AG04449 (cell line): ENCODE measurements at regions of chr3 and their contacts with region 1.

Region 1: GRCh38 chr3:98602078-98602678 is 8.8 kb upstream of the CPOX start:
- DNase-seq: peak; percentile 17
- H3K4me3 ChIP-seq: no peak overlapping the region
- CTCF ChIP-seq: peak; percentile 67

Region 2: DNA sequence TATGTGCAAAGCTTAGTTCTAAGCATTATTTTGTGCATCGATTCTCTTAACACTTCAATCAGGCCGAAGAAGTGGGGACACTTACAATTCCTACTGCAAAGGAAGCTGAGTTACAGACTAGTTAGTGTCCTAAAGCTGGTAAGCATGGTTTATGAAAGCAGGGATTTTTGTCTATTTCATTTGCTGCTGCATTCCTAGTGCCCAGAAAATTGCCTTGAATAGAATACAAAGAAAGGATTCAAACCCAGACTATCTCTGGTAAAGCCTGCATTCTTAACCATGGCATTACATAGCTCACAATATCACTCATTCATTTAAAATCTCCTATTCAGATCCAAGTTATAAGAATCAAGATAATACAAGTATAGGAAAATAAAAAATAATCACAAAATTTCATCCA is 15.7 kb after region 1 on chr3:
- CTCF ChIA-PET with region 1: interaction called, 43 read pairs
- POLR2A ChIA-PET with region 1: no interaction called
- DNase-seq: no peak
- H3K4me3 ChIP-seq: no peak overlapping the region
- CTCF ChIP-seq: no peak

Region 3: GRCh38 chr3:98705706-98706105 is 103.5 kb after region 1 on chr3:
- CTCF ChIA-PET with region 1: interaction called, 27 read pairs
- POLR2A ChIA-PET with region 1: no interaction called
- DNase-seq: no peak
- H3K4me3 ChIP-seq: no peak overlapping the region
- CTCF ChIP-seq: peak; percentile 32

Region 4: DNA sequence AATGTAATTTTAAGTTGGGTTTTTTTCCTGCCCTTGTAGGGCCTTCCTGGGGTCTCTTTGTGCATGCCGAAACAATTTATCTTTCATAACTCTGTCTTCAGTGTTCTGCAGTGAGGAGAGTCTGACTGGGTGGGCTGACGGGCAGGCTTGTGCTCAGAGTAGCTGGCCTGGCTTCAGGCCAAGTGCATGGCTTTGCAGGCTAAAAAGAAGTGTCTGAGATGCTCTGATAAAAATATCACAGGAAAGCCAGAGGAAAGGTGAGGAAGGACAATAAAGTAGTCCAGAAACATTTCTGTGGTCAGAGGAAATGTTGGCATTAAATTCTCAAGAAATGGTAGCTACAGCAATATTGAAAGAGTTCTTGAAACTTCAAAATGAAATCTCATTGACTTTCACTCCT is 186.5 kb after region 1 on chr3:
- CTCF ChIA-PET with region 1: interaction called, 56 read pairs
- POLR2A ChIA-PET with region 1: interaction called, 3 read pairs
- DNase-seq: no peak
- H3K4me3 ChIP-seq: no peak overlapping the region
- CTCF ChIP-seq: no peak

Region 5: DNA sequence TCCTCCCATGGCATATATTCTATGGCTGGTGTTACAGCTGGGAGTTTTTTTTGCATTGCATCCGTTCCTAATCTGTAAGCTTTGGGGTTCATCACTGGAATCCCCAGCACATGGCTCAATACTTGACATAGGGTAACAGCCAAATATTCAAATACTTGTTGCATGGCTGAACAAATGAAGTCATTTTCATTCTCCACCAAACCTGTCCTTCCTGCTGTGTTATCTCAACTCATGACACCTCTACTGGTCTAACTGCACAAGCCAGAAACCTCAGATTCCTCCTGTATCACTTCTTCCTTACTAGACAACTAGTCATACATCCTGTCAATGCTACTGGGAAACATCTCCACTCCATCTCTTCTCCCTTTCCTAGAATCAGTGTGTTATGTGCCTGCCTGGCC is 204.4 kb after region 1 on chr3:
- CTCF ChIA-PET with region 1: interaction called, 267 read pairs
- POLR2A ChIA-PET with region 1: no interaction called
- DNase-seq: no peak
- H3K4me3 ChIP-seq: no peak overlapping the region
- CTCF ChIP-seq: no peak

Region 6: DNA sequence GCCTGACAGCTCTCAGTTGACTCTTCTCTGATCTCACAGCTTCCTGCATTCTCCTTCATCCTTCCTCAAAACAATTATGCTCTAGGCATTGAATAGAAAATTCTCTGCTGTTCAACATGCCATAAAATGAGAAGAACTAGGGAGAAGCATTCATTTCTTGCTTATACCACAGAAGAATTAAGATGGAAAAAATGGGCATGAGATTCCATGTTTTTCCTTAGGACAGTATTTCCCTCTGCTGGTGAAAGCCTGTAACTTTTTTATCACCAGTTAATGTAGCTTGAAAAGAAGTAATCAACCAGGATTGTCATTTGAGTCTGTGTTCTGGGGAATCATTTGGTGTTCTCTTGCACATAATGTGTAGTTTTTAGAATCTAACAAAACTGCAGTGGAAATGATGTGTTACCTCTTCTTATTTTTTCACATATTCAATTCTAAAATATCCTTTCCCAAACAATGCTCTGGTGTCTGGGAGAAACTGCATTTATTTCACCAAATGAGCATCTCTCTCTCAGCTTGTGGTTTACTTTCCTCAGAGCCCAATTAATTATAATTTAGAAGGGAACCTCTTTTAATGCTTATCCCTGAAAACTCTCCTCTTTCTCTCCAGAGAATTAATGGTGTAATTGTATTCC is 392.1 kb after region 1 on chr3:
- CTCF ChIA-PET with region 1: interaction called, 37 read pairs
- POLR2A ChIA-PET with region 1: no interaction called
- DNase-seq: no peak
- H3K4me3 ChIP-seq: no peak overlapping the region
- CTCF ChIP-seq: peak; percentile 30